Mammary epithelial cell (primary cell): ENCODE measurements at regions of chr1 and their contacts with region 1.

Region 1: DNA sequence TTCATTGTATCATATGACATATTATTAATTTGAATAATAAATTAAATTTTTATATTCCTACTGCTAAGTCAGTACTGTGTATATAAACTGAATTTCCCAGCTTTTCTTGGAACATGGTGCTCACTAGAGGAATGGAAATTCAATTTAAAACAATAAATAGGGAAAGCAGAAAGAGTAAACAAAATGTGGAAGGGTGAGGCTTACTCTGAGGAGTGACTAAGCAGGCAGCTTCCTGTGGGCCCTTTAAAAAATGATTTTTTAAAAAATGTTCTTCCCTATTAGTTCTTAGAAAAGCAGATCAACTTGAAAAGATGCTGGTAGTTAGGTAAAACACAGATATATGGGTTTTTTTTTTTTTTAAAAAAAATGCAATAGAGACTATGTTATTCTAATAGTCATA is 49.5 kb upstream of the S1PR1 start:
- DNase-seq: no peak
- H3K4me3 ChIP-seq: no peak overlapping the region
- H3K27ac ChIP-seq: no peak overlapping the region
- H3K4me1 ChIP-seq: peaks cover 22% of the 10 kb centered on the region
- H3K27me3 ChIP-seq: no peaks in the 10 kb centered on the region
- CTCF ChIP-seq: no peak

Region 2: DNA sequence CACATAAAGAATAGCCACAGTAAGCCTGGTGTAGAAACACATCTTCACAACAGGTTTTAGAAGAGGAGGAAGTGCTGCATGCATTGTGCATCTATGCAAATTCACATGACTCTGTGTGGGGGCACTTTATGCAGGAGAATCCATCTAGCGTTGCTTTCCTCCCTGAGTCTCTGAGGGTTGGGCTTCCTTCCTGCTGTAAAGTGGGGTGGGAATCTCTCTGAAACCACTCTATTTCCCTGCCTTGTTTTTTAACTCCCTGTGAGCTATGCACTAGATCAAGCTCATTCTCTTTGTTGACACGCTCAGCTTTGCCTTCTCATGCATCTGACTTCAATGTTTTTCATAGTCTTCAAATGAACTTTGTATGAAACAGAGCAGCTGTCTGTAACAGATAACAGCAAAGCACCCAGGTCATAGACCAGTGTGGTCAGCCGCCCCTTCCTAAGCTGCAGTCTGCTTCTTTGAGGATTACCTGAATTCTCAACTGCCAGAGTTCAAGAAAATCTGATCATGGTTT is 59.0 kb before region 1 on chr1:
- CTCF ChIA-PET with region 1: no interaction called
- dilution Hi-C with region 1: no loop called
- in situ Hi-C with region 1: no loop called
- intact Hi-C with region 1: no loop called
- DNase-seq: no peak
- H3K4me3 ChIP-seq: no peak overlapping the region
- H3K27ac ChIP-seq: no peak overlapping the region
- H3K4me1 ChIP-seq: no peaks in the 10 kb centered on the region
- H3K27me3 ChIP-seq: no peaks in the 10 kb centered on the region
- CTCF ChIP-seq: no peak

Region 3: GRCh38 chr1:101148980-101149379 is 38.3 kb before region 1 on chr1:
- CTCF ChIA-PET with region 1: no interaction called
- dilution Hi-C with region 1: no loop called
- in situ Hi-C with region 1: no loop called
- intact Hi-C with region 1: no loop called
- DNase-seq: peak; percentile 32
- H3K4me3 ChIP-seq: no peak overlapping the region
- H3K27ac ChIP-seq: peak overlapping the region; percentile 16
- H3K4me1 ChIP-seq: peaks cover 19% of the 10 kb centered on the region
- H3K27me3 ChIP-seq: no peaks in the 10 kb centered on the region
- CTCF ChIP-seq: no peak

Region 4: DNA sequence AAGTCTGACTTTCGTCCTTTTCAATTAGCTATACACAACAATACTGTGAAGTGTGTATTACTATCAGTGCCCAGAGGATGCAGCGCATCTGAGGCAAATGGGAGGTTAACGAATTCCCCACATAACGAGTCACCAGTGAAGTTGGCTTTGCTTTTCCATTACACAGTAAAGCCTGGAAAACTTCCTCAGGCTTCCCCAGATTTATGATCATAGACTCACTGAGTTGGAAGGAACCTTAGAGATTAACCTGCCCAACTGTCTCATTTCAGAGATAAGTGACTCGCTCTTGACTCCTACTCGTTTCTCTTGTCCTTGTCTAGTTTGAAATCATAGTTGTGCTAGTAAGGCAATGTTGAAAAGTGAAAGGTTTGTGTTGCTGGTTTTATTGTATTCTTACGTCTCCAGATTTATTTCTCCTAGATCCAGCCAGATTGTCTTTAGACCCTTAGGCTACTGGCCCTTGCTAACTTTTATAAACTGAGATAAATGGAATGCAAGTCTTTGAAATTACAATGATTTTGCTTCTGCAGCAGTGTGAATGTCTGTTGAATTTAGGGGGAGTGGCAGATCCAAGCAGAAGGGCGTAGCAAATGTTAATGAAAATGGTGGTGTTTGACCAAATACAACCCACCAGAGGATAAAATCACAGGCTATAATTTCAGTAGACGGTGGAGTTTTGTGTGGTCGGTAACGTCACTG is 66.8 kb after region 1 on chr1:
- CTCF ChIA-PET with region 1: no interaction called
- dilution Hi-C with region 1: loop called (anchors 5 kb)
- in situ Hi-C with region 1: no loop called
- intact Hi-C with region 1: no loop called
- DNase-seq: peak; percentile 55
- H3K4me3 ChIP-seq: no peak overlapping the region
- H3K27ac ChIP-seq: no peak overlapping the region
- H3K4me1 ChIP-seq: peaks cover 13% of the 10 kb centered on the region
- H3K27me3 ChIP-seq: no peaks in the 10 kb centered on the region
- CTCF ChIP-seq: no peak